ENCODE measurements at regions of chr7 and their contacts with region 1.

Region 1: DNA sequence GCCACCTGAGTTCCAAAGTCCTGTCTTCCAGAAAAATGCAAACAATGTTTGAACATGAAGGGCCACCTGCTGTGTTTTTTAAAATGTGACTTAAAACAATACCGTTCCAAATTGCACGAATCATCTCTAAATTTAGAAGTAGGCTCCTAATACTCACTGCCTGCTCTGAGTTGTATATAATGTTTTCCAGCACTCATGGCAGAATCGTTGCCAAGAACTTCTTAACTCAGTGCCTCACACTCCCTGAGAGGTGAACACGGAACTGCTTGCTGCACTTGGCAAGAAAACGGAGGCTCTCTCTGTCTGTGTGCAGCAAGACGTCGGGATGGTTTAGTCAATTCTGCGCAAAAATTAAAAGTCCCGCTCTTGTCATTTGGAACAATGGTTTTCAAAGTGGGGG is 757.3 kb upstream of the AUTS2 start:
- DNase-seq: no peak
- ATAC-seq: no peak

Region 2: GRCh38 chr7:68192941-68193340 is 648.0 kb before region 1 on chr7:
- intact Hi-C with region 1: loop called (anchors 10 kb)
- DNase-seq: no peak
- ATAC-seq: no peak